Stomach (tissue), 19 donors: ENCODE measurements at regions of chr9 and their contacts with region 1.

Region 1: DNA sequence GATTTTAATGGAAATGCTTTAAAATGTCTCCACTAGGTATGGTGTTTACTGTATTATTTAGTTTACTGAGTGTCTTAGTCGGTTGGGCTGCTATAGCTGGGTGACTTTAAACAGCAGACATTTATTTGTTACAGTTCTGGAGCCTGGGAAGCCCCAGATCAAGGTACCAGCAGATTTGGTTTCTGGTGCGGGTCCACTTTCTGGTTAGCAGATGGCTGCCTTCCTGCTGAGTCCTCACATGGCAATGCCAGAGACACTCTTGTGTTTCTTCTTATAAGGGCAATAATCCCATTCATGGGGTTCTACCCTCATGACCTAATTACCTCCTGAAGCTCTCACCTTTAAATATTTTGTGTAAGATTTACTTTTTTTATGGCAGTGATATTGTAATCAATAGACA is 715 bp upstream of the OR1J4 start:
- DNase-seq: no peak
- H3K4me3 ChIP-seq: no peak overlapping the region
- H3K27ac ChIP-seq: no peak overlapping the region
- H3K4me1 ChIP-seq: no peaks in the 10 kb centered on the region
- H3K27me3 ChIP-seq: no peaks in the 10 kb centered on the region
- CTCF ChIP-seq: no peak
- EP300 ChIP-seq: no peak
- POLR2A ChIP-seq: no peak

Region 2: GRCh38 chr9:122297512-122297911 is 220.7 kb before region 1 on chr9:
- intact Hi-C with region 1: no loop called
- DNase-seq: no peak
- H3K4me3 ChIP-seq: no peak overlapping the region
- H3K27ac ChIP-seq: no peak overlapping the region
- H3K4me1 ChIP-seq: peaks cover 0 to 15% (median 4%) of the 10 kb centered on the region in 4 donors
- H3K27me3 ChIP-seq: no peaks in the 10 kb centered on the region
- CTCF ChIP-seq: no peak
- EP300 ChIP-seq: no peak
- POLR2A ChIP-seq: no peak

Region 3: GRCh38 chr9:122572456-122572855 is 54.2 kb after region 1 on chr9:
- intact Hi-C with region 1: loop called (anchors 10 kb)
- DNase-seq: no peak
- H3K4me3 ChIP-seq: no peak overlapping the region
- H3K27ac ChIP-seq: no peak overlapping the region
- H3K4me1 ChIP-seq: no peaks in the 10 kb centered on the region
- H3K27me3 ChIP-seq: no peaks in the 10 kb centered on the region
- CTCF ChIP-seq: no peak
- EP300 ChIP-seq: no peak
- POLR2A ChIP-seq: no peak

Region 4: DNA sequence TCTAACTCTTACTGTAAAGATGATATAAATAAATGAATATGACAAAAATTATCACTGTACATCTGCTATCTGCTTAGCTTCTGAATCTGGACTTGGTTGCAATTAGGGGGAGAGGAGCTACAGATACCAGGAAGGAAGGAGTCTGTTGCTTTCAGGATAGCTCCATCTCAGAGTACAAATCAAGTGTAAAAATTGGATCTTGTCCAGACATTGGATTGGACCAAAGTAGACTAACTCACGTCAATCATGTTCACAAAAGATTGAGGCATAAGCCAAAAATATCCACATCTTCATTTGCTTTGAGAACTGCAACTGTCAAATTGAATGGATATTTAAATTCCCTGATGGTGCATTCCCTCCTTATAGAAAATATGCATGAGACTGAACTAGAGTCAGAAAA is 87.5 kb after region 1 on chr9:
- intact Hi-C with region 1: no loop called
- DNase-seq: no peak
- H3K4me3 ChIP-seq: no peak overlapping the region
- H3K27ac ChIP-seq: no peak overlapping the region
- H3K4me1 ChIP-seq: no peaks in the 10 kb centered on the region
- H3K27me3 ChIP-seq: no peaks in the 10 kb centered on the region
- CTCF ChIP-seq: no peak
- EP300 ChIP-seq: no peak
- POLR2A ChIP-seq: no peak

Region 5: DNA sequence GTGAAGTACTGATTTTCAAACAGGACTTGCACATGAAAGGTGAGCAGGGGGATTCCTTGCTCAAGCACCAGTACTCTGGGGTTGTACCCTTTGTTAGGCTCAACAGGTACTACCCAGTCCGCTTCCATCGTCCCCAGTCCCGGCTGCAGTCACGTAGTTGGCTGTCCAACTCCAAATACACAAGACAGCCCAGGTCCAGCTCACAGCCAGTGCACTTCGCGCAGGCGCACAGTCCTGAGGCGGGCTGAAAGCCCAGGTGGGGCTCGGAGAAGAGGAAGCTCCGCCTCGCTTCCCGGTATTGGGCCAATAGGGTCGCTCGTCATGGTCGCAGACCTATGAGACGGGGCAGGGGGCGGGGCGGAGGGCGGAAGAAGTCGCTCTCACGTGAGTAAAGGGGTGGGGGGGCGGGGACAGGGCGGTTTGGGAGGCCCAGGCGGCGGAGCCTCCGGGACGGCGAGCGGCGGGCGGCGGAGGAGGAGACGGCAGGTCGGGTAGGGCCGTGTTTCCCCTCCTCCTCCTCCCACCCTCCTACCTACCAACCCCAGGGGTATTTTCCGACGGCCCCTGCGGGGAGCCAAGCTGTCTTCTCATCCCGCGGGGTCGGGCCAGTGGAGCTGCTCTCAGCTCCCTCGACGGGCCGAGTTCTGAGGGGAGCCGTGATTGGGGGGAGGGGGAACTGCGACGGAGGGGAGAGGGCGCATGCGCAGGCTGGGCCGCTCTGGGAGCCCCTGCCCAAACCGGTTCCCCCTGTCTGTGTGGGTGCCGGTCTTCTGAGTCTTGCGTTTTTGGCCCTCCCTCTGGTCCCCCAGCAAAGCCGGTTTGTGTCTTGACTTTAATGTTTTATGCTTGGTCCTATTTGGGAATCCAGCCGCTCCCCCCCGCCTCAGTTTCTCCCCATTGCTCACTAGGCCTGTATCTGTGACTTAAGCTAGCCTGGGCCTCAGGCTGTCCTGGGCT is 422.7 kb after region 1 on chr9 and contains the start of gene RABGAP1:
- intact Hi-C with region 1: no loop called
- DNase-seq: peak; percentile 100
- H3K4me3 ChIP-seq: peak within 1 kb of the TSS; percentile 72 to 95 (median 84)
- H3K27ac ChIP-seq: peak within 1 kb of the TSS; percentile 94 to 97 (median 95)
- H3K4me1 ChIP-seq: peaks cover 22 to 55% (median 44%) of the 10 kb centered on the region in 4 donors
- H3K27me3 ChIP-seq: no peaks in the 10 kb centered on the region
- CTCF ChIP-seq: no peak
- EP300 ChIP-seq: no peak
- POLR2A ChIP-seq: peak in 1 of 4 donors; percentile 70
- total RNA-seq, gene RABGAP1: 25.8 to 157 (median 52.3) TPM